ENCODE measurements at regions of chr1 and their contacts with region 1.

Region 1: GRCh38 chr1:7831458-7831857 is 21.4 kb downstream of the UTS2 start:
- H3K4me3 Mint-ChIP-seq: no peak overlapping the region
- H3K27ac Mint-ChIP-seq: no peak overlapping the region
- H3K4me1 Mint-ChIP-seq: peaks cover 8% of the 10 kb centered on the region
- H3K27me3 Mint-ChIP-seq: no peaks in the 10 kb centered on the region

Region 2: DNA sequence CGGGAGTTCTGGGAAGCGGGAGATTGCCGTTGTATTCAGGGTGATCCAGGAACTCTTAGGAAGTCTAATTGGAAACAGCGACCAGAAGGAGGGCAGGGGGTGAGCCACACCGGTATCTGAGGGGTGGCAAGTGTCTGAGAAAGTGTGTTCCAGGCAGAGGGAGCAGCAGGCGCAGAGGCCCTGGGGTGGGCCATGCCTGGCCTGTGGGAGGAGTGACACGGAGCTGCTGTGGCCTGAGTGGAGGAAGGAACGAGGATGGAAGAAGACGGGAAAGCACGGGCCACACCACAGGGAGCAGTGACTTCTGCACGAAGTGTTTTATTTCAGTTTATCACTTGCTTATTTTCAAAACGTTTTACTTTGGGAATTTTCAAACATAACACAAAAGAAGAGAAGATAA is 36.1 kb before region 1 on chr1:
- intact Hi-C with region 1: no loop called
- H3K4me3 Mint-ChIP-seq: no peak overlapping the region
- H3K27ac Mint-ChIP-seq: no peak overlapping the region
- H3K4me1 Mint-ChIP-seq: peaks cover 6% of the 10 kb centered on the region
- H3K27me3 Mint-ChIP-seq: no peaks in the 10 kb centered on the region

Region 3: GRCh38 chr1:7902478-7903085 is 71.1 kb after region 1 on chr1:
- intact Hi-C with region 1: loop called (anchors 2 kb)
- H3K4me3 Mint-ChIP-seq: peak overlapping the region; percentile 34
- H3K27ac Mint-ChIP-seq: peak overlapping the region; percentile 52
- H3K4me1 Mint-ChIP-seq: peaks cover 12% of the 10 kb centered on the region
- H3K27me3 Mint-ChIP-seq: peaks cover 3% of the 10 kb centered on the region

Region 4: DNA sequence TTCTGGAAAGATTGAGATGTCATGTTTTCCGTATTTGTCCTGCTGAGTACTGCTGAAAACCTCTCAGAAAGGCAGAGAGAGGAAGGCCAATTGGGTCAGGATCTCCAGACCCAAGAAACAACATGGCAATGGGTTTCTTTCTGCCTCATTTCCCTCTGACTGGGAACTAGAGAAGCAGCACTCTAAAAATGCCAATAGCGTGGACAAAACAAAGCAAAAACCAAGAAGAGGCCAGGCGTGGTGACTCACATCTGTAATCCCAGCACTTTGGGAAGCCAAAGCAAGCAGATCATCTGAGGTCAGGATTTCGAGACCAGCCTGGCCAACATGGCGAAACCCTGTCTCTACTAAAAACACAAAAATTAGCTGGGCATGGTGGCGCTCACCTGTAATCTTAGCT is 90.8 kb after region 1 on chr1:
- intact Hi-C with region 1: no loop called
- H3K4me3 Mint-ChIP-seq: no peak overlapping the region
- H3K27ac Mint-ChIP-seq: no peak overlapping the region
- H3K4me1 Mint-ChIP-seq: peaks cover 10% of the 10 kb centered on the region
- H3K27me3 Mint-ChIP-seq: no peaks in the 10 kb centered on the region